ENCODE measurements at regions of chr6 and their contacts with region 1.

Region 1: GRCh38 chr6:132512638-132513632 is at the start of gene STX7:
- DNase-seq: peak; percentile 94
- ATAC-seq: peak; percentile 79
- H3K4me3 ChIP-seq: peak within 1 kb of the TSS; percentile 59 to 98 (median 85)
- H3K4me3 Mint-ChIP-seq: peak within 1 kb of the TSS; percentile 93
- H3K27ac ChIP-seq: peak within 1 kb of the TSS; percentile 90 to 92
- H3K27ac Mint-ChIP-seq: peak within 1 kb of the TSS; percentile 95
- H3K4me1 ChIP-seq: peaks cover 33 to 36% of the 10 kb centered on the region in 2 donors
- H3K4me1 Mint-ChIP-seq: peaks cover 56% of the 10 kb centered on the region
- H3K27me3 ChIP-seq: no peaks in the 10 kb centered on the region
- H3K27me3 Mint-ChIP-seq: no peaks in the 10 kb centered on the region
- CTCF ChIP-seq: peak; percentile 12
- total RNA-seq, gene STX7: 221 and 227 TPM in 2 replicates

Region 2: DNA sequence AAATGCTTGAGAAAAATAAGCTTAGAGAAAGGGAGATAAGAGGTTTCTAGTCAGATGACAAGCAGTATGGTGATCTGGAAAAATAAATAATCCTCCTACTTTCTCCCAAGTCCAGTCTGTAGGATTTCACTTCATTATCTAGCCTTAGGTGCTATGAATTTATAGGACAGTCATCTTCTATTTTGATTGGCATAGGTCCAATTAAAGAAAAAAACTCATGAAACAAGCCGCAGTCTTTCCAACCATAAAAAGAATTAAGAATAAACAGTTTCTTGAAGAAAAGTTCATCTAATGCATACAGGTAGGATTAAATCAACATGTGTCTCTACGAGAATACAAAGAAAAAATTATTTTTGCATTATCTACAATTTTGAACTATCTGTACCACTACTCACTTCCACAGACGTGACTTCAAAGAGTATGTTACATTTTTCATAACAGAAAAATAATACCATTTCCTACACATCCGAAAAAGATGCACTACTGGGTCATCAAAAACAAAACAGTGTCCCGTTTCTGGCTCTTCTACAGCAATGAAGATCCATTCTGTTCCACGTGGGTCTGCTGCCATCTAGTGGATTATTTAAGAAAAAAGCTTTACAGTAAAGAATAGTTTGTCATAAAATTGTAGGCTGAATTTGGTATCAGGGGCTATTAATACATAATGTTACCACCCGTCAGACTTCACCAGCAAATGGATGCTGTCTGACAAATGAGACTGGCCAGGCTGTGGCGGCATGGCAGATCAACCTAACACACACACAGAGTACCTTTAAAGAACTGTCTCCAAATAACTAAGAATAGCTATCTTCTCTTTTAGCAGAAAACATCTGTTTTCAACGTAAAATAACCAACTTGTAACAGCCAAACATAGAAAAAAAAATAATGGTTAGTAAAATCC is 28.9 kb before region 1 on chr6:
- CTCF ChIA-PET with region 1: interaction called, 81 read pairs
- POLR2A ChIA-PET with region 1: interaction called, 7 read pairs
- intact Hi-C with region 1: no loop called
- DNase-seq: peak; percentile 83
- ATAC-seq: peak; percentile 78
- H3K4me3 ChIP-seq: peak overlapping the region in 1 of 5 experiments; percentile 5
- H3K4me3 Mint-ChIP-seq: peak overlapping the region; percentile 41
- H3K27ac ChIP-seq: peak overlapping the region; percentile 27 to 92
- H3K27ac Mint-ChIP-seq: peak overlapping the region; percentile 75
- H3K4me1 ChIP-seq: peaks cover 59 to 88% of the 10 kb centered on the region in 2 donors
- H3K4me1 Mint-ChIP-seq: peaks cover 85% of the 10 kb centered on the region
- H3K27me3 ChIP-seq: no peaks in the 10 kb centered on the region
- H3K27me3 Mint-ChIP-seq: no peaks in the 10 kb centered on the region
- CTCF ChIP-seq: peak; percentile 84

Region 3: DNA sequence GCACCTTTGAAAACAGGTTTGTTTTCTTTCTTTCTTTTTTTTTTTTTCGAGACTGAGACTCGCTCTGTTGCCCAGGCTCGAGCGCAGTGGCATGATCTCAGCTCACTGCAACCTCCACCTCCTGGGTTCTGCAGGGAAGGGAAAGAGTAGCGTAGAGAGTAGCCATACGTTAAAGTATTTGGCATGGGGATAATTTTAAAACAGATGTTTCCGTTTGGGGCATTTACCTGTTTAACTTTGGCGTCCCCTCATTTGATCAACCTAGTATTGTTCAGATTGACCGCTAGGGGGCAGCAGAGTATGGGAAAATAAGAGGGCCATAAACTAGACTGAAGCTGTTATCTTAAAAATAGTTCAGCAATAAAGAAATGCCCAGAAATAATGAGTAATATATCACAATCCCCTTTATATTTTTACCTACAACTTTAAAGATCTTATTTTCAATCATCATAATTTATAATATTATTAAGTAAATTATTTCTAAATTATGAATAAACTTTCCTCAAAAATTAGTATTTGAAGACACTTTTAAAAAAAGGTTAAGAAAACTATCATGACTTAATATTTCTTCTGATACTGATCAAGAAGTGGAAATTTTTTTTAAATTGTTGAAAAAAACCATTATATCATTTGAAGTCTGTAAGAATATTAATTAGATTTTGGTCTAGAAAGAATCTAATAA is 17.5 kb after region 1 on chr6:
- CTCF ChIA-PET with region 1: interaction called, 19 read pairs
- POLR2A ChIA-PET with region 1: interaction called, 3 read pairs
- intact Hi-C with region 1: loop called (anchors 1 kb)
- DNase-seq: peak; percentile 82
- ATAC-seq: peak; percentile 71
- H3K4me3 ChIP-seq: peak overlapping the region in 4 of 5 experiments; percentile 7 to 54 (median 46)
- H3K4me3 Mint-ChIP-seq: peak overlapping the region; percentile 85
- H3K27ac ChIP-seq: no peak overlapping the region
- H3K27ac Mint-ChIP-seq: peak overlapping the region; percentile 77
- H3K4me1 ChIP-seq: peaks cover 3 to 4% of the 10 kb centered on the region in 2 donors
- H3K4me1 Mint-ChIP-seq: peaks cover 4% of the 10 kb centered on the region
- H3K27me3 ChIP-seq: no peaks in the 10 kb centered on the region
- H3K27me3 Mint-ChIP-seq: no peaks in the 10 kb centered on the region
- CTCF ChIP-seq: peak; percentile 90

Region 4: DNA sequence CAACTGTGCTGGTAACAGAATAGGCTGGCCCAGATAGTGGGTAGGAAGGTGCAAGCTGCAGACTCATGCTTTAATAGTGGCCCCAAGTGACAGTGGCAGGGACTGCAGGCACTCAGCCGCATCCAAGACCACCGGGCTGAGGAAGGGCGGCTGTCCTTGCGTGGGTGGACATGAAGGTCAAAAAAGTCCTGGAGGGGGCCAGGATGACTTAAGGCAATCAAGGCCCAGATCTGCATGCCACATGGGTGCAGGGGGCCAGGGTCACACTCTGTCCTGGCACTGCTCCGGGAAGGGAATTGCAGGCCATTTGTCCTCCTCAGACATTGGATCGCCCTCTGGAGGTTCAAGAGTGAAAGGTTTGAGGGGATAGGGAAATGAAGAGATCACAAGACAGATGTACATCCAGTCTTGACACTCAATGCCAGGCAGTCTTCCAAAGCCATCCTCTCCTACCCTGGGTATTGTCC is 255.1 kb after region 1 on chr6:
- CTCF ChIA-PET with region 1: no interaction called
- POLR2A ChIA-PET with region 1: no interaction called
- intact Hi-C with region 1: loop called (anchors 2 kb)
- DNase-seq: peak; percentile 60
- ATAC-seq: peak; percentile 79
- H3K4me3 ChIP-seq: no peak overlapping the region
- H3K4me3 Mint-ChIP-seq: peak overlapping the region; percentile 27
- H3K27ac ChIP-seq: no peak overlapping the region
- H3K27ac Mint-ChIP-seq: peak overlapping the region; percentile 38
- H3K4me1 ChIP-seq: peaks cover 7 to 14% of the 10 kb centered on the region in 2 donors
- H3K4me1 Mint-ChIP-seq: peaks cover 22% of the 10 kb centered on the region
- H3K27me3 ChIP-seq: no peaks in the 10 kb centered on the region
- H3K27me3 Mint-ChIP-seq: no peaks in the 10 kb centered on the region
- CTCF ChIP-seq: peak; percentile 63

Region 5: GRCh38 chr6:132813173-132813856 is 300.4 kb after region 1 on chr6:
- CTCF ChIA-PET with region 1: no interaction called
- POLR2A ChIA-PET with region 1: interaction called, 27 read pairs
- intact Hi-C with region 1: loop called (anchors 1 kb)
- DNase-seq: peak; percentile 75
- ATAC-seq: peak; percentile 18
- H3K4me3 ChIP-seq: peak overlapping the region; percentile 72 to 100 (median 83)
- H3K4me3 Mint-ChIP-seq: peak overlapping the region; percentile 98
- H3K27ac ChIP-seq: peak overlapping the region; percentile 65 to 82
- H3K27ac Mint-ChIP-seq: peak overlapping the region; percentile 98
- H3K4me1 ChIP-seq: peaks cover 25% of the 10 kb centered on the region in 2 donors
- H3K4me1 Mint-ChIP-seq: peaks cover 47% of the 10 kb centered on the region
- H3K27me3 ChIP-seq: no peaks in the 10 kb centered on the region
- H3K27me3 Mint-ChIP-seq: no peaks in the 10 kb centered on the region
- CTCF ChIP-seq: no peak